Gastrocnemius medialis (tissue), 4 donors: ENCODE measurements at regions of chr13 and their contacts with region 1.

Region 1: GRCh38 chr13:38349390-38350113 is at the start of gene UFM1:
- DNase-seq: peak; percentile 81 to 85
- ATAC-seq: peak; percentile 97 to 98
- H3K4me3 ChIP-seq: peak within 1 kb of the TSS; percentile 60 to 98 (median 88)
- H3K27ac ChIP-seq: peak within 1 kb of the TSS; percentile 87 to 94 (median 90)
- H3K4me1 ChIP-seq: peaks cover 12 to 21% of the 10 kb centered on the region in 2 donors
- H3K27me3 ChIP-seq: no peaks in the 10 kb centered on the region
- CTCF ChIP-seq: no peak
- POLR2A ChIP-seq: peak; percentile 54 to 65
- total RNA-seq, gene UFM1: 22.6 to 31.0 (median 24.3) TPM

Region 2: GRCh38 chr13:37058910-37059847 is 1290.4 kb before region 1 on chr13 and contains the start of gene SUPT20H:
- in situ Hi-C with region 1: loop called in 1 of 4 experiments (anchors 25 kb)
- intact Hi-C with region 1: loop called (anchors 2 kb)
- DNase-seq: peak; percentile 90
- ATAC-seq: peak; percentile 97 to 99
- H3K4me3 ChIP-seq: peak within 1 kb of the TSS; percentile 82 to 99 (median 87)
- H3K27ac ChIP-seq: peak within 1 kb of the TSS; percentile 86 to 98 (median 94)
- H3K4me1 ChIP-seq: peaks cover 8 to 10% of the 10 kb centered on the region in 2 donors
- H3K27me3 ChIP-seq: no peaks in the 10 kb centered on the region
- CTCF ChIP-seq: peak in 1 of 5 experiments; percentile 13
- POLR2A ChIP-seq: peak; percentile 66 to 79
- total RNA-seq, gene SUPT20H: 18.1 to 24.4 (median 19.1) TPM

Region 3: GRCh38 chr13:38255296-38255995 is 94.1 kb before region 1 on chr13:
- in situ Hi-C with region 1: no loop called
- intact Hi-C with region 1: no loop called
- DNase-seq: no peak
- ATAC-seq: no peak
- H3K4me3 ChIP-seq: no peak overlapping the region
- H3K27ac ChIP-seq: no peak overlapping the region
- H3K4me1 ChIP-seq: no peaks in the 10 kb centered on the region
- H3K27me3 ChIP-seq: no peaks in the 10 kb centered on the region
- CTCF ChIP-seq: no peak
- POLR2A ChIP-seq: no peak

Region 4: GRCh38 chr13:38412266-38412665 is 62.7 kb after region 1 on chr13:
- in situ Hi-C with region 1: no loop called
- intact Hi-C with region 1: no loop called
- DNase-seq: no peak
- ATAC-seq: no peak
- H3K4me3 ChIP-seq: no peak overlapping the region
- H3K27ac ChIP-seq: no peak overlapping the region
- H3K4me1 ChIP-seq: no peaks in the 10 kb centered on the region
- H3K27me3 ChIP-seq: no peaks in the 10 kb centered on the region
- CTCF ChIP-seq: no peak
- POLR2A ChIP-seq: no peak